Stomach (tissue), 19 donors: ENCODE measurements at regions of chr1 and their contacts with region 1.

Region 1: DNA sequence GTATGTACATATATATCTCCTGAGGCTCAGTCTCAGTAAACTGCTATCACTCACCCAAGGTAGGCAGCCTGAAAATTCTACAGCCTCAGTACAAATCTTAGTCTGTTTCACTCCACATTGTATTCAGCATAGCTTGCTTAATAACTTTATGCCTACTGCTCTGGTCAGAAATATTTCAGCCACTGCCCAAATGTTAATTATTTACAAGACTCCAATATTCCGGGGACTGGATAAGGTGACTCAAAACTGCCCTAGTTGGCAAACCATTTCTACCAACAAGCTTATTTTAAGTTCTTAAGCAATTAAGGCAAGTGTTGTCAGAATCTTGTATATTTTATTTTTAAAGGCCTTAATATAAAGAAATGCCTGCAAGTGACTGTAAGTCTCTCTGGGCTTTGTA is 114.8 kb downstream of the LRRIQ3 start:
- DNase-seq: no peak
- H3K4me3 ChIP-seq: no peak overlapping the region
- H3K27ac ChIP-seq: no peak overlapping the region
- H3K4me1 ChIP-seq: no peaks in the 10 kb centered on the region
- H3K27me3 ChIP-seq: no peaks in the 10 kb centered on the region
- CTCF ChIP-seq: no peak
- EP300 ChIP-seq: no peak
- POLR2A ChIP-seq: no peak

Region 2: GRCh38 chr1:74197657-74198552 is 114.8 kb after region 1 on chr1 and contains the starts of genes FPGT and LRRIQ3:
- intact Hi-C with region 1: no loop called
- DNase-seq: peak; percentile 94 to 99
- H3K4me3 ChIP-seq: peak within 1 kb of the TSS; percentile 50 to 65 (median 60)
- H3K27ac ChIP-seq: peak within 1 kb of the TSS; percentile 79 to 89 (median 86)
- H3K4me1 ChIP-seq: peaks cover 0 to 24% (median 18%) of the 10 kb centered on the region in 4 donors
- H3K27me3 ChIP-seq: no peaks in the 10 kb centered on the region
- CTCF ChIP-seq: no peak
- EP300 ChIP-seq: no peak
- POLR2A ChIP-seq: peak in 1 of 4 donors; percentile 46
- total RNA-seq, gene FPGT: 4.3 to 29.6 (median 22.8) TPM
- total RNA-seq, gene LRRIQ3: 2.2 TPM in 1 of 5 donors, not detected in the others

Region 3: DNA sequence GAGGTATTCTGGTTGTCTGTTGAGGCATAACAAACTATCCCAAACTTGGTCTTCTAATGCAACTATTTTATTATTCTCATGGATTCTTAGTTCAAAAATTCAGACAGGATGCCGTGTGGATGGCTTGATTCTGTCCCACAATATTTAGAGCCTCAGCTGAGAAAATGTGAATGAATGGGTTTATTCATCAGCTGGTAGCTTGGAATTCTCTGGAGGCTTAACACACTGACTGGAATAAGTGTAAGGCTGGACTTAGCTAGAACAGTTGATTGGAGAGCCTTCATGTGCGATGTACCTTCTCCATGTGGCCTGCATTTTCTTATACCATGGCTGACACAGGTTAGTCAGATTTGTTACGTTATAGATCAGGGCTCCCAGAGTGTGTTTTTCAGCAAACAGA is 182.9 kb after region 1 on chr1:
- intact Hi-C with region 1: loop called (anchors 5 kb)
- DNase-seq: no peak
- H3K4me3 ChIP-seq: no peak overlapping the region
- H3K27ac ChIP-seq: no peak overlapping the region
- H3K4me1 ChIP-seq: no peaks in the 10 kb centered on the region
- H3K27me3 ChIP-seq: no peaks in the 10 kb centered on the region
- CTCF ChIP-seq: no peak
- EP300 ChIP-seq: no peak
- POLR2A ChIP-seq: no peak